ENCODE measurements at regions of chr4 and their contacts with region 1.

Region 1: GRCh38 chr4:37686373-37687193 is at the start of gene RELL1:
- DNase-seq: peak; percentile 100
- ATAC-seq: peak; percentile 88 to 89
- H3K4me3 ChIP-seq: peak within 1 kb of the TSS; percentile 74 to 88 (median 82)
- H3K27ac ChIP-seq: peak within 1 kb of the TSS; percentile 96 to 100 (median 98)
- H3K4me1 ChIP-seq: peaks cover 28 to 35% of the 10 kb centered on the region in 2 donors
- H3K27me3 ChIP-seq: no peaks in the 10 kb centered on the region
- CTCF ChIP-seq: no peak
- POLR2A ChIP-seq: no peak
- total RNA-seq, gene RELL1: 13.7 to 36.3 (median 27.8) TPM

Region 2: DNA sequence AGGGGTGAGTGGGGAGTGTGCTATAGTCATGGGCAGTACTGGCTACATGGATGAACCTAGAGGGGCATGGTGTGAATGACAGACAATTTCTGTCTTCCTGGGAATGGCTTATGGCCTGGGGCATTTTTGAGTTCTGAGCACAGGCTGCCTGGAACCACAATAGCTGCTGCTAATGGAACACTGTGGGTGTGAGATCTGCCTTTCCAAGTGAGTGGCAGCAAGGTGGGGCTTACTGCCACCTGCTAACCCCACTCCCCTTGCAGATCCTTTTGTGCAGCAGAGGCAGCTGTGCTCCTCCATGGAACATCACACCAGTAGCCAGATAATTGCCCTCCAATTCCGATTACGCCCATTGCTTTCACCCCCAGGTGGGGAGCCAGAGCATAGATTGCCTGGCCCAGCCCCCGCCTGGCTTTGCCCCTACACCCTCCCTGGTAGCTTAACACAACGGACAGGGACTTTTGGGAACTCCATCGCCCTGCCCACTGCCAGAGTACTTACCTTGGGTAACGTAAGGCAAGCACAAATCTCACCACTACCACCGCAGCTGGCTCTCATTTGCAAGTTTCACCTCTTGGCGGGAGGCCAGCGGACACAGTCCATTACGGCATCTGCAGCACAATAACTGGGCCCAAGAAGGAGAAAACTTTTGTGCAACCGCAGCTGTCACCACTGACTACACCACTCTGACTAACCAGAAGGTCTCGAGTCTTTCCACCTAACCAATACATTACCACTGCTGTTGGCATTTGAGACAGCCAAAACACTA is 863.2 kb before region 1 on chr4:
- in situ Hi-C with region 1: no loop called
- intact Hi-C with region 1: no loop called
- DNase-seq: no peak
- ATAC-seq: no peak
- H3K4me3 ChIP-seq: no peak overlapping the region
- H3K27ac ChIP-seq: no peak overlapping the region
- H3K4me1 ChIP-seq: no peaks in the 10 kb centered on the region
- H3K27me3 ChIP-seq: no peaks in the 10 kb centered on the region
- CTCF ChIP-seq: no peak
- POLR2A ChIP-seq: no peak

Region 3: DNA sequence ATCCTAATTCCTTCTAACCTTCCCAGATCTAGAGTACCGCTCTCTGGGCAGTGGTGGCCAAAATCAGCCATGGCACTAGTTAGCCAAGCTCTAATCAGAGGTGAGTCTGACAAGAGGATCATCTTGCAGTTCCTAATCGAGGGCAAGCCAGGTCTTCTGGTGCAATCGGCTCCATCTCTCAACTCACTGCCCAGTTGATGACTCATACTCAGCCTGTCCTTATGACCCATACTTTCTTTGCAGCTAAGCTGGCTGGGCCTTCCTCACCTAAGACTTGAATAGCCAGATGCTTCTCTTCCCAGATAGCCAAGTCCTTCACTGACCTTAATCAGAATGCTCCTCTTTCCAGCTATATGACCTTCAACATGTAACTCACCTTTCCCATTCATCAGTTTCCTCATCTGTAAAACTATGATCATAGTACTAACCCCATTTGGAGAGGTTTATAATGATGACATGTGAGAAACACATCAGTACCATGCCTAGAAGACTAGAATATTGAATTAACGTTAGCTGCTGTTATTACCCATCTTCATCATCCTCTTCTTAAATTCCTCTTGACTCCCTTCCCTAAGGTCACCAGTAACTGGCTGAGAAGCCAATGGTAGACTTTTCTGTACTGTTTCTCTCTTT is 57.5 kb before region 1 on chr4:
- in situ Hi-C with region 1: no loop called
- intact Hi-C with region 1: loop called (anchors 1 kb)
- DNase-seq: peak; percentile 90 to 96
- ATAC-seq: peak; percentile 99
- H3K4me3 ChIP-seq: no peak overlapping the region
- H3K27ac ChIP-seq: peak overlapping the region; percentile 83 to 86 (median 84)
- H3K4me1 ChIP-seq: peaks cover 33 to 60% of the 10 kb centered on the region in 2 donors
- H3K27me3 ChIP-seq: no peaks in the 10 kb centered on the region
- CTCF ChIP-seq: peak in 1 of 5 experiments; percentile 13
- POLR2A ChIP-seq: no peak

Region 4: GRCh38 chr4:37666625-37667071 is 19.9 kb before region 1 on chr4:
- in situ Hi-C with region 1: no loop called
- intact Hi-C with region 1: loop called (anchors 1 kb)
- DNase-seq: peak; percentile 75 to 83
- ATAC-seq: peak; percentile 96
- H3K4me3 ChIP-seq: no peak overlapping the region
- H3K27ac ChIP-seq: peak overlapping the region; percentile 72 to 83 (median 80)
- H3K4me1 ChIP-seq: peaks cover 57 to 65% of the 10 kb centered on the region in 2 donors
- H3K27me3 ChIP-seq: no peaks in the 10 kb centered on the region
- CTCF ChIP-seq: peak in 3 of 5 experiments; percentile 35 to 45 (median 42)
- POLR2A ChIP-seq: no peak

Region 5: DNA sequence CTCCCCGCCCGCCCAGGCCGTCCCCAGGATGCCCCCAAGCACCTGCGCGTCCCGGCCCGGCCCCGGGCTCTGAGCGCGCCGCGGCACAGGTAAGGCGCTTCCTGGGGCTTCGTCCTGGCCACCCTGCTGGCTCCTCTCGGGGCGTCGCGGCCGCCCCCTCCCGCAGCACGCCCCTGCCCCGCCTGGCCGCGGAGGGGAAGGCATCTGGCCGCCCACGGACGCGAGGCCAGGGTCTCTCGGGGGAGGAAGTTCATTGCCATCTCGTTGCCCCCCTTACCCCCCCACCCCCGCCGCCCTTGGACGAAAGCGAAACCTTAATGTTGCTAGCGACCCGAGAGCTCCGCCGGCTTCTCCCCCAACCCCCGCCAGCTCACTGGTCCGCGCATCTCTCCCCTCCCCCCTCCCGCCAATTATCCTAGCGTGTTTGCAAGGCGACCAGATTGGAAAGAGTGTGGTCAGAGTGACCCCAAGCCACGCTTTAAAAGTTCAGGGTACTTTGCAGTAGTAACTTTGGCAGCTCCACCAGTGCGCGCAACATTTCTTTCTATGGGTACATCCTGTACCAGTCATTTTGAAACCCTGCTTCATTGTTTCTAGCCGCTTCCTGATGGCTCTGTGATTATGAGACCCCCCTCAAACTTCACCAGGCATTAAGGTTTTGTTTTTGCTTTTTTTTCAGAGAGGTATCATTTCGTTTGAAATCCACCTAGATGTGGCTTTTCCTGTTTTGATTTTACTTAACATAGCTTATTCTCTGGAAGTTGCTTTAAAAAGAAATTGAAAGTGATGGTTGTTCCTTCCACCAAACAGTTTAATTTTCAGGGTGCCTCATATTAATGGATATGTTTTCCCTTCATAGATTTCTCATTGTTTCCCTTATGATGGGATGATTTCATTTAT is 204.9 kb after region 1 on chr4:
- in situ Hi-C with region 1: no loop called
- intact Hi-C with region 1: loop called (anchors 2 kb)
- DNase-seq: peak; percentile 33 to 71
- ATAC-seq: peak; percentile 44 to 54
- H3K4me3 ChIP-seq: peak overlapping the region; percentile 85 to 95 (median 88)
- H3K27ac ChIP-seq: peak overlapping the region; percentile 94 to 99 (median 96)
- H3K4me1 ChIP-seq: peaks cover 21 to 26% of the 10 kb centered on the region in 2 donors
- H3K27me3 ChIP-seq: no peaks in the 10 kb centered on the region
- CTCF ChIP-seq: peak in 1 of 5 experiments; percentile 15
- POLR2A ChIP-seq: peak in 1 of 2 donors; percentile 16

Region 6: GRCh38 chr4:38663801-38664705 is 977.5 kb after region 1 on chr4 and contains the start of gene KLF3:
- in situ Hi-C with region 1: no loop called
- intact Hi-C with region 1: loop called (anchors 10 kb)
- DNase-seq: peak; percentile 88 to 92
- ATAC-seq: peak; percentile 65 to 70
- H3K4me3 ChIP-seq: peak within 1 kb of the TSS; percentile 94 to 99 (median 98)
- H3K27ac ChIP-seq: peak within 1 kb of the TSS; percentile 97 to 100 (median 98)
- H3K4me1 ChIP-seq: peaks cover 38 to 44% of the 10 kb centered on the region in 2 donors
- H3K27me3 ChIP-seq: no peaks in the 10 kb centered on the region
- CTCF ChIP-seq: no peak
- POLR2A ChIP-seq: peak; percentile 93 to 95
- total RNA-seq, gene KLF3: 12.7 to 26.5 (median 19.4) TPM

Measured in gastrocnemius medialis (tissue), 4 donors.